Activated CD8-positive, alpha-beta T cell treated with anti-CD3 and anti-CD28 coated beads, Interleukin-2, amount 10 ng/mL, durations not matched to agents 7 days and 5 days (primary cell): ENCODE measurements at regions of chr4 and their contacts with region 1.

Region 1: GRCh38 chr4:145234091-145234706 is 53.8 kb upstream of the OTUD4 start:
- DNase-seq: peak; percentile 63
- ATAC-seq: peak; percentile 94
- H3K4me3 Mint-ChIP-seq: no peak overlapping the region
- H3K27ac Mint-ChIP-seq: no peak overlapping the region
- H3K4me1 Mint-ChIP-seq: no peaks in the 10 kb centered on the region
- H3K27me3 Mint-ChIP-seq: peaks cover 13% of the 10 kb centered on the region

Region 2: GRCh38 chr4:145557720-145558119 is 323.5 kb after region 1 on chr4:
- CTCF ChIA-PET with region 1: interaction called, 18 read pairs
- POLR2A ChIA-PET with region 1: no interaction called
- DNase-seq: peak; percentile 63
- ATAC-seq: peak; percentile 73
- H3K4me3 Mint-ChIP-seq: no peak overlapping the region
- H3K27ac Mint-ChIP-seq: no peak overlapping the region
- H3K4me1 Mint-ChIP-seq: no peaks in the 10 kb centered on the region
- H3K27me3 Mint-ChIP-seq: peaks cover 5% of the 10 kb centered on the region

Region 3: DNA sequence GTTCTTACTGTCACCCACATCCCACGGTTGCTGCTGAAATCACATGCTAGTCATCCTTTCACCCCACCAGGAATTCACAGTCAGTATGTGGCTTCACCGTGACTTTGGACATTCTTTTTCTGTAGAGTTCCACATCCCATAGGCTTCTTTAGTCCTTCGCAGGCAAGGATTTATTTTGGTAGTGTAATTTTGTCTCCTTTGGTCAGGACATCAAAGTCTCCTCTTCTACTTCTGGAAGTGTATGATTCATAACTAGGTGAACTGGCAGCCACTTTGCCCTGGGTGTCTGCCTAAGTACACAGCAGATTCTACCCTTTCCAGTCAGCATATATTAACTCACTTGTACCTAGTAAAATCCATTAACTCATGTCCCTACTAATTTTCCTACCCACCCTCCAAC is 346.7 kb after region 1 on chr4:
- CTCF ChIA-PET with region 1: no interaction called
- POLR2A ChIA-PET with region 1: no interaction called
- DNase-seq: no peak
- ATAC-seq: no peak
- H3K4me3 Mint-ChIP-seq: no peak overlapping the region
- H3K27ac Mint-ChIP-seq: no peak overlapping the region
- H3K4me1 Mint-ChIP-seq: no peaks in the 10 kb centered on the region
- H3K27me3 Mint-ChIP-seq: peaks cover 15% of the 10 kb centered on the region

Region 4: GRCh38 chr4:145609481-145610427 is 375.6 kb after region 1 on chr4:
- CTCF ChIA-PET with region 1: interaction called, 11 read pairs
- POLR2A ChIA-PET with region 1: no interaction called
- DNase-seq: peak; percentile 76
- ATAC-seq: peak; percentile 74
- H3K4me3 Mint-ChIP-seq: no peak overlapping the region
- H3K27ac Mint-ChIP-seq: no peak overlapping the region
- H3K4me1 Mint-ChIP-seq: no peaks in the 10 kb centered on the region
- H3K27me3 Mint-ChIP-seq: peaks cover 18% of the 10 kb centered on the region

Region 5: GRCh38 chr4:145618932-145619638 is 384.9 kb after region 1 on chr4 and contains the start of gene MMAA:
- CTCF ChIA-PET with region 1: interaction called, 34 read pairs
- POLR2A ChIA-PET with region 1: no interaction called
- DNase-seq: peak; percentile 96
- ATAC-seq: peak; percentile 98
- H3K4me3 Mint-ChIP-seq: peak within 1 kb of the TSS; percentile 91
- H3K27ac Mint-ChIP-seq: peak within 1 kb of the TSS; percentile 98
- H3K4me1 Mint-ChIP-seq: peaks cover 33% of the 10 kb centered on the region
- H3K27me3 Mint-ChIP-seq: peaks cover under 1% of the 10 kb centered on the region
- total RNA-seq, gene MMAA: 6.8 to 8.2 TPM